CD4-positive, alpha-beta T cell (primary cell): ENCODE measurements at regions of chr18 and their contacts with region 1.

Region 1: GRCh38 chr18:3447895-3448837 is 1.8 kb upstream of the TGIF1 start:
- DNase-seq: peak; percentile 74 to 95 (median 84)
- ATAC-seq: peak; percentile 52
- H3K4me3 ChIP-seq: peak overlapping the region; percentile 90
- H3K4me3 Mint-ChIP-seq: peak overlapping the region; percentile 95
- H3K27ac ChIP-seq: peak overlapping the region; percentile 94 to 98
- H3K27ac Mint-ChIP-seq: peak overlapping the region; percentile 99
- H3K4me1 ChIP-seq: peaks cover 48% of the 10 kb centered on the region
- H3K4me1 Mint-ChIP-seq: peaks cover 47% of the 10 kb centered on the region
- H3K27me3 ChIP-seq: no peaks in the 10 kb centered on the region
- H3K27me3 Mint-ChIP-seq: peaks cover 5% of the 10 kb centered on the region
- CTCF ChIP-seq: no peak

Region 2: GRCh38 chr18:2958819-2959298 is 489.3 kb before region 1 on chr18:
- CTCF ChIA-PET with region 1: no interaction called
- POLR2A ChIA-PET with region 1: interaction called, 4 read pairs
- intact Hi-C with region 1: loop called in 1 of 2 experiments (anchors 10 kb)
- DNase-seq: peak in 3 of 14 experiments; percentile 41 to 71 (median 47)
- ATAC-seq: no peak
- H3K4me3 ChIP-seq: no peak overlapping the region
- H3K4me3 Mint-ChIP-seq: peak overlapping the region; percentile 83
- H3K27ac ChIP-seq: peak overlapping the region; percentile 39 to 88
- H3K27ac Mint-ChIP-seq: peak overlapping the region; percentile 96
- H3K4me1 ChIP-seq: peaks cover 76% of the 10 kb centered on the region
- H3K4me1 Mint-ChIP-seq: peaks cover 95% of the 10 kb centered on the region
- H3K27me3 ChIP-seq: no peaks in the 10 kb centered on the region
- H3K27me3 Mint-ChIP-seq: no peaks in the 10 kb centered on the region
- CTCF ChIP-seq: no peak

Region 3: DNA sequence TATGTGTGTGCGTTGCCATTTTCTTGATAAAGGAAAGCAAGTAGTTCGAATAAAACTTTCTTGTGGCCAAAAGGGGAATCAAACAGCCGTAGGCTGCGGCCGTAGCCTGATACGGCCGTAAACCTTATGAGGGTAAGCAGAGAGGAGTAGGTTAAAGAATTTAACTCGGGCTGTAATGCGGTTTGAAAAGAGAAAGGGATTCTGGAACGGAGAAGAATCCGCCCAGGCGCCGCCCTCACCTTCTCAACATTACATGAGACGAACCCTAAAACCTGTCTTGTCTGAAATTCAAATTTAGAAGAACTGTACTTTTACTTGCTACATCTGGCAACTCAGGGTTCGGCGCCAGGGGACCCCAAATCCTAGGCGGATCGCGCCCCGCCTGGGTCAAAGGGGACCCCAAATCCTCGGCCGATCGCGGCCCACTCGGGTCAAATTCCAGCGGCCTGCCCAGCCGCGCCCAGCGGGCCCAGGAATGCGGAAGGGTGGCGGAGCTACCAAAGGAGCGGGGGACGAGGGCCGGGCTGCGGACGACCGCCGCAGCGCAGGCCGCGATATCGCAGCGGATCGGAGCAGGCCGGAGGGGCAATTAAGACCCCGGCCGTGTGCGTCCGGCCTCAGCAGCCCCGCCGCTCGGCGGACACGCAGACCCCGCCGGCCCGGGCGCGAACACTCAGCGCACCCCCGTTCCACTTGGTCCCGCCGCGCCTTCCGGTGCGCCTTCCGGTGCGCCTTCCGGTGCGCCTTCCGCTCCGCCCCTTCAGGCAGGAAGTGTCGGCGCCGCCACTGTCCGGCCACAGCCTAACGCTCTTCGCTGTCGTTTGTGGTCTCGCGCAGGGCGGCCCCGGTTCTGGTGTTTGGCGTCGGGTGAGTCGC is 186.6 kb before region 1 on chr18 and contains the start of gene MYL12B:
- CTCF ChIA-PET with region 1: interaction called, 6 read pairs
- POLR2A ChIA-PET with region 1: interaction called, 32 read pairs
- intact Hi-C with region 1: loop called (anchors 5 kb)
- DNase-seq: peak; percentile 63 to 92 (median 75)
- ATAC-seq: peak; percentile 71
- H3K4me3 ChIP-seq: peak within 1 kb of the TSS; percentile 68
- H3K4me3 Mint-ChIP-seq: peak within 1 kb of the TSS; percentile 100
- H3K27ac ChIP-seq: peak within 1 kb of the TSS; percentile 95 to 98
- H3K27ac Mint-ChIP-seq: peak within 1 kb of the TSS; percentile 100
- H3K4me1 ChIP-seq: peaks cover 43% of the 10 kb centered on the region
- H3K4me1 Mint-ChIP-seq: peaks cover 85% of the 10 kb centered on the region
- H3K27me3 ChIP-seq: no peaks in the 10 kb centered on the region
- H3K27me3 Mint-ChIP-seq: no peaks in the 10 kb centered on the region
- CTCF ChIP-seq: no peak
- total RNA-seq, gene MYL12B: 128 to 133 TPM

Region 4: DNA sequence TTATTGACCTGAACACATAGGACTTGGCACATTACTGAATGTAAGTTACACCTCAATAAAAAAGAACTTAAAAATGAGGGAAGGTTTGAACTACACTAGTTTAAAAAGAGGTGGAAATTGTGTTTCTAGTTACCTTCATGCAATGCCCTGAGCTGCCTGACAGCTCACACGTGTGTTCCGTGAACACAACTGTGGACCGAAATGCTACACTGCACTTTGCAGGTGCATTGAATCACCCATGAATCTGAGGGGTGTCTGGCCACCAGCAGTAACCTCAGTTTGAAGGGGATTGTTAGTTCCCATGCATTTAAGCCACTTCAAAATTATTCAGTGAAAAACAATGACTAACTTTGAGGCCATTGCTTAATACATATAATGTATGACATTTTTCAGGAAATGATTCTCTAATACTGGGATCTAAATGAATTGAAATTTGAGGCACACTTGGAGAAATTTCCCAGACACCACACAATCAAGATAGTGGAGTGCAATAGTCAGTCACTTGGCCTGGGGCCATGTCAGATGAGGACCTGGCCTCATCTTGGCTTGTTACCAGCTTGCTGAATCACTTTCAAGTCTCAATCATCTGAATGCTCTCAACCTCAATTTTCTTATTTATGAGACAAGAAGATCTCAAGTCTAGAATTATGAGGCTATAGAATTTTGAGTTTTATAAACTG is 126.9 kb before region 1 on chr18:
- CTCF ChIA-PET with region 1: interaction called, 3 read pairs
- POLR2A ChIA-PET with region 1: interaction called, 7 read pairs
- intact Hi-C with region 1: loop called in 1 of 2 experiments (anchors 5 kb)
- DNase-seq: no peak
- ATAC-seq: no peak
- H3K4me3 ChIP-seq: no peak overlapping the region
- H3K4me3 Mint-ChIP-seq: no peak overlapping the region
- H3K27ac ChIP-seq: no peak overlapping the region
- H3K27ac Mint-ChIP-seq: no peak overlapping the region
- H3K4me1 ChIP-seq: no peaks in the 10 kb centered on the region
- H3K4me1 Mint-ChIP-seq: no peaks in the 10 kb centered on the region
- H3K27me3 ChIP-seq: no peaks in the 10 kb centered on the region
- H3K27me3 Mint-ChIP-seq: peaks cover 12% of the 10 kb centered on the region
- CTCF ChIP-seq: no peak

Region 5: GRCh38 chr18:3411854-3412268 is 36.3 kb before region 1 on chr18:
- CTCF ChIA-PET with region 1: no interaction called
- POLR2A ChIA-PET with region 1: interaction called, 14 read pairs
- intact Hi-C with region 1: no loop called
- DNase-seq: peak in 10 of 14 experiments; percentile 2 to 57 (median 40)
- ATAC-seq: no peak
- H3K4me3 ChIP-seq: peak overlapping the region; percentile 24
- H3K4me3 Mint-ChIP-seq: no peak overlapping the region
- H3K27ac ChIP-seq: no peak overlapping the region
- H3K27ac Mint-ChIP-seq: no peak overlapping the region
- H3K4me1 ChIP-seq: peaks cover 12% of the 10 kb centered on the region
- H3K4me1 Mint-ChIP-seq: peaks cover 13% of the 10 kb centered on the region
- H3K27me3 ChIP-seq: no peaks in the 10 kb centered on the region
- H3K27me3 Mint-ChIP-seq: no peaks in the 10 kb centered on the region
- CTCF ChIP-seq: no peak

Region 6: GRCh38 chr18:3593904-3594661 is 145.9 kb after region 1 on chr18:
- CTCF ChIA-PET with region 1: interaction called, 51 read pairs
- POLR2A ChIA-PET with region 1: interaction called, 140 read pairs
- intact Hi-C with region 1: loop called (anchors 1 kb)
- DNase-seq: peak; percentile 79 to 97 (median 88)
- ATAC-seq: peak; percentile 74
- H3K4me3 ChIP-seq: peak overlapping the region; percentile 59
- H3K4me3 Mint-ChIP-seq: peak overlapping the region; percentile 94
- H3K27ac ChIP-seq: peak overlapping the region; percentile 89 to 98
- H3K27ac Mint-ChIP-seq: peak overlapping the region; percentile 100
- H3K4me1 ChIP-seq: peaks cover 62% of the 10 kb centered on the region
- H3K4me1 Mint-ChIP-seq: peaks cover 59% of the 10 kb centered on the region
- H3K27me3 ChIP-seq: no peaks in the 10 kb centered on the region
- H3K27me3 Mint-ChIP-seq: no peaks in the 10 kb centered on the region
- CTCF ChIP-seq: peak; percentile 82

Region 7: GRCh38 chr18:5295981-5296705 is 1848.0 kb after region 1 on chr18:
- CTCF ChIA-PET with region 1: no interaction called
- POLR2A ChIA-PET with region 1: interaction called, 12 read pairs
- intact Hi-C with region 1: no loop called
- DNase-seq: peak; percentile 93 to 98 (median 96)
- ATAC-seq: peak; percentile 60
- H3K4me3 ChIP-seq: peak overlapping the region; percentile 79
- H3K4me3 Mint-ChIP-seq: peak overlapping the region; percentile 97
- H3K27ac ChIP-seq: peak overlapping the region; percentile 87 to 89
- H3K27ac Mint-ChIP-seq: peak overlapping the region; percentile 98
- H3K4me1 ChIP-seq: peaks cover 24% of the 10 kb centered on the region
- H3K4me1 Mint-ChIP-seq: peaks cover 47% of the 10 kb centered on the region
- H3K27me3 ChIP-seq: peaks cover 0 to 3% of the 10 kb centered on the region in 2 experiments
- H3K27me3 Mint-ChIP-seq: no peaks in the 10 kb centered on the region
- CTCF ChIP-seq: no peak